GM13976 (cell line): ENCODE measurements at regions of chr19 and their contacts with region 1.

Region 1: GRCh38 chr19:50147462-50148423 is 15.3 kb downstream of the IZUMO2 start:
- DNase-seq: peak; percentile 64
- CTCF ChIP-seq: no peak

Region 2: GRCh38 chr19:49929611-49930482 is 217.9 kb before region 1 on chr19:
- in situ Hi-C with region 1: loop called (anchors 25 kb)
- DNase-seq: peak; percentile 98
- CTCF ChIP-seq: no peak